ENCODE measurements at regions of chr15 and their contacts with region 1.

Region 1: GRCh38 chr15:100602064-100602822 is at the starts of genes ASB7 and LINS1:
- DNase-seq: peak; percentile 100
- H3K4me3 Mint-ChIP-seq: no peak within 1 kb of the TSS
- H3K27ac Mint-ChIP-seq: peak within 1 kb of the TSS; percentile 99
- H3K4me1 Mint-ChIP-seq: peaks cover 47% of the 10 kb centered on the region
- H3K27me3 Mint-ChIP-seq: no peaks in the 10 kb centered on the region
- total RNA-seq, gene ASB7: 18.3 and 18.7 TPM in 2 replicates
- total RNA-seq, gene LINS1: 64.1 and 70.5 TPM in 2 replicates

Region 2: DNA sequence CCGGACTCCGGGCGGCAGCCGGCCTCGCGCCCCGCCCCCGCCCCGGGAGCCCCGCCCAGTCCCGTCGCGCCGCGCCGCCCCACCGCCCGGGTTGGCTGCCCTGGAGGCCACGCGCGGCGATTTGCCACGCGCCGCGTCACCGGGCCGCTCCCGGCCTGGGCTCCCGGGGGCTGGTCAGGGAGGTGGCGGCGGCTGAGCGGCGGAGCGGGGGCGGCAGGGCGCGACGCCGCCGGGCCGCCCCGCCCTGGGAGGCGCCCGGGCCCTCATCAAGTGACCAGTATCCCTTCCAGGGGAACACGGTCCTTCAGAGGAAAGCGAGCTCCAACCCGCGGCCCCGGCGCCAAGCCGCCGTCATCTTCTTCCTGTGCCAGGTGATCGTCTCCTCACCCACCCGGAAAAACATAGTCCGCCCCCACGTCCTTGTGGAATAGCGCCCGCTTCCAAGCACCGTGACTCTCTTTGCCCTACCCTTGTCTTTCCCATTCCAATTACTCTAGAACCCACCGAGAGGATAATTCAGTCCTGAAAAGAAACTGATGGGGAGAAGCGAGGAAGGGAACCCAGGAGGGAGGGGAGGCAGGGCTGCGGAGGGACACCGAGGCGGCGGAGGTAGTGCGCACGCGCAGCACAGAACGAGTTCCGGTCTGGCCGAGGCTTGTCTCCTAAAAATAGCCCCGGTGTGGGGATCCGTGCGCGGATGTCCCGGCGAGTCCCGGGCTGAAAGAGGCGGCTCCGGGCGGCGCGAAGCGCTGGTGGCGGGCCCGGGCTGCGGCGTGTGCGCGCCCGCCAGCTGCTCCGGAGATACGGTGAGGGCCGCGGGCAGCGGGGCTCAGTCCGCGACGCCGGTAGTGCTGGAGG is 1036.7 kb before region 1 on chr15 and contains the start of gene MEF2A:
- intact Hi-C with region 1: loop called (anchors 10 kb)
- DNase-seq: peak; percentile 89
- H3K4me3 Mint-ChIP-seq: peak within 1 kb of the TSS; percentile 98
- H3K27ac Mint-ChIP-seq: peak within 1 kb of the TSS; percentile 95
- H3K4me1 Mint-ChIP-seq: peaks cover 36% of the 10 kb centered on the region
- H3K27me3 Mint-ChIP-seq: peaks cover 4% of the 10 kb centered on the region
- total RNA-seq, gene MEF2A: 27.4 and 30.2 TPM in 2 replicates

Region 3: DNA sequence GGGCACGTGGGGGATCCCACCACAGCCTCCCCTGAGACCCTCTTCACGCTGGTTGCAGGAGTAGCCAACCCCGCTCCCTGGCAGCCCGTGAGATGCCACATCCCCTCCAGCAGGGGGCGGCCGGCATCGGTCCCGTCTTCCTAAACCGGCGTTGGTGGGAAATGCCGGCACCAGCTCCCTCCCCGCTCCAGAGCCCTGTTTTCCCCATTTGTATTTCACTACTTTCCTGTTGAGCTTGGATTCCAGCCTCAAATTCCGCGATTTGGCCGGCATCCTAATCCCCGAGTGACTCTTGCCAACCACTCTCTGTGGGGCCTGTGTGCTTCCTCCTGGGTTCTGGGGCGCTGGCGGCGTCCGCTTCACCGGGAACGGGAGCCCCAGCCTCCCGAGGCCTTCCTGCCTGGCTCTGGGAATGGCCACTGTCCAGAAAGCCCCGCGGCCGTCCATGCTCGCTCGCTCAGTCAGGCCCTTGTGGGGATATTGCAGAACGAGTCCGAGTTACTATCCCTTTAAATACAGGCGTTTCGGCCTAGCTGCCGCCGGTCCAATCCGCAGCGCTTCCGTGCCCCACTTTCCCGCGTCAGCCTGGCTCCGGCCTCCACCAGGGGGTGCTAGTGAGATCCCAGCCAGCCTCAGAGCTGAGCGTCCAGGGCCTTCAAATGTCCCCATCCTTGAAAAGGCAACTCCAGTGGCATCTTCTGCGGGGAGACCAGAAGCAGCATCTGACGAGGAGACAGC is 252.4 kb before region 1 on chr15:
- intact Hi-C with region 1: loop called (anchors 1 kb)
- DNase-seq: peak; percentile 86
- H3K4me3 Mint-ChIP-seq: peak overlapping the region; percentile 88
- H3K27ac Mint-ChIP-seq: peak overlapping the region; percentile 86
- H3K4me1 Mint-ChIP-seq: peaks cover 11% of the 10 kb centered on the region
- H3K27me3 Mint-ChIP-seq: peaks cover 8% of the 10 kb centered on the region

Region 4: GRCh38 chr15:100500226-100500990 is 101.8 kb before region 1 on chr15:
- intact Hi-C with region 1: no loop called
- DNase-seq: no peak
- H3K4me3 Mint-ChIP-seq: no peak overlapping the region
- H3K27ac Mint-ChIP-seq: no peak overlapping the region
- H3K4me1 Mint-ChIP-seq: no peaks in the 10 kb centered on the region
- H3K27me3 Mint-ChIP-seq: no peaks in the 10 kb centered on the region

Region 5: GRCh38 chr15:100635406-100636071 is 33.3 kb after region 1 on chr15:
- intact Hi-C with region 1: no loop called
- DNase-seq: no peak
- H3K4me3 Mint-ChIP-seq: no peak overlapping the region
- H3K27ac Mint-ChIP-seq: no peak overlapping the region
- H3K4me1 Mint-ChIP-seq: peaks cover 31% of the 10 kb centered on the region
- H3K27me3 Mint-ChIP-seq: no peaks in the 10 kb centered on the region

Region 6: GRCh38 chr15:101242160-101242998 is 640.1 kb after region 1 on chr15:
- intact Hi-C with region 1: loop called (anchors 5 kb)
- DNase-seq: peak; percentile 68
- H3K4me3 Mint-ChIP-seq: peak overlapping the region; percentile 60
- H3K27ac Mint-ChIP-seq: peak overlapping the region; percentile 89
- H3K4me1 Mint-ChIP-seq: peaks cover 100% of the 10 kb centered on the region
- H3K27me3 Mint-ChIP-seq: no peaks in the 10 kb centered on the region

Region 7: DNA sequence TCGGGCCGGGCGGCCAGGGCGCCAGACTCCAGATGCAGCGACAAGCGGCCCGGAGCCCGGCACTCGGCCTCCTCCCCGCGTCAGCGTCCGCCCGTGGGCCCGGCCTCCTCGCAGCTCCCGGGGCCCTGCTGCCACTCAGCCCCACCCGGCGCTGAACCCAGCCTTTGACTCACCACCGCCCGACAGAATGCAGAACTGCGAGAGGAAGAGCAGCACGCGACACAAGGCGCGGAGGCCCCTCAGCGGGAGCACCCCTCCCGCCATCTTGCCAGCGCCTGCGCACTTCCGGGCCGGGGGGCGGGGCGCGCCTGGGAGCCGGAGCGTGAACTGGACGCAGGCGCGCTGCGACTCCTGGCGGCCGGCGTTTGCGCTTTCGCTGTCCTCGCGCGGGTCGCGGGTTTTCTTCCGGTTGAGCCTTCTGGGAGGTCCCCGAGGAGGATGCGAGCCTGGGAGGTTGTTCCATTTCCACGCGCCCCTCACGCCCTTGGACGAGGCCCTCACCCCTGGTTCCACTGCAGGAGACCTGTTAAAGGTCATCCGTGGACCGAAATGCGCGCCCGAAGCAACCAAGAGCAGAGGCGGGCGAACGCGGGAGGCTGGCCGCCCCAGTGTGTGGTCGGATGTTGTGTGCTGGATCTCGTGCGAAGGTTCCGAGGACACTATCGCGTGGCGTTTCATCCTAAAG is 1050.0 kb after region 1 on chr15 and contains the start of gene TM2D3:
- intact Hi-C with region 1: loop called (anchors 5 kb)
- DNase-seq: peak; percentile 94
- H3K4me3 Mint-ChIP-seq: peak within 1 kb of the TSS; percentile 93
- H3K27ac Mint-ChIP-seq: peak within 1 kb of the TSS; percentile 93
- H3K4me1 Mint-ChIP-seq: peaks cover 36% of the 10 kb centered on the region
- H3K27me3 Mint-ChIP-seq: no peaks in the 10 kb centered on the region
- total RNA-seq, gene TM2D3: 57.1 and 62.4 TPM in 2 replicates

Measured in activated T-helper 1 cell treated with anti-CD3 and anti-CD28 coated beads, Interleukin-12 subunit alpha, Interleukin-12 subunit beta, Interleukin-2, Interleukin-4 antibody, amounts not matched to agents 30 ng/mL and 10 ng/mL and 1 ng/mL, durations not matched to agents 14 hours and 24 hours and 36 hours (primary cell).